Endothelial cell of umbilical vein (primary cell): ENCODE measurements at regions of chr5 and their contacts with region 1.

Region 1: DNA sequence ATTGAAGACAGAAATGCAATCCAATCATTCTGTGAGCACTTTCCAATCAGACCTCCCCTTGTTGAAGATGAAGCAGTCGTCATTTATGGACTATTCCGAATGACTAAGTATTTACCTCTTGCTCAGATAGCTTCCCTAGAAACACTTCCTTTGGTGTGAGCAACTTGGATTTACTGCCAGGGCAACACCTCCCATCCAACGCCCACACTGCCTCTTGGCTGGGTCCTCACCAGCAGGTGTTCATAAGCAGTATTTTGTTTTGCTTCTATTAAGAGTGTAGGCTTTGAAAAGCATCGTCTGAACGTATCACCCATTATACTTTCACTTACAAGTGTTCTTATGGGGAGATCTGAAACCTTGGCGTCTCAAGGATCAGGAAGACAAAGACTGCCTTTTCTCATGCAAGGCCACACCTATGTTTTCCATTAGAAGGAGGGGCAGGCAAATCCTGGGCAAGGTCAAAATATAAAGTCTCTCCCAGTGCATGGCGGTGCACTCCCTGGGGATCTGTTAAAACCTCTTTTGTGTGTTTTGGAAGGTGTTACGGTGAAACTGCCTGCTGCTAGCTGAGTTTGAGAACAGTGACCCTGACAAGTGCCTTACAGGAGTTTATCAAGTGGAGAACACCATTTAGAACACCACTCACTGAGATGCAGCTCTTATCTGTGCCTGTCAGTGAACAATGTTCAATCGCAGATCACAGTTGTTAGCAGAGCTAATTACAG is 10.6 kb upstream of the MARCHF3 start:
- DNase-seq: peak; percentile 87
- H3K4me3 ChIP-seq: peak overlapping the region in 1 of 3 experiments; percentile 19
- H3K27ac ChIP-seq: peak overlapping the region; percentile 87
- H3K4me1 ChIP-seq: peaks cover 33% of the 10 kb centered on the region
- H3K27me3 ChIP-seq: no peaks in the 10 kb centered on the region
- CTCF ChIP-seq: no peak
- POLR2A ChIP-seq: no peak

Region 2: DNA sequence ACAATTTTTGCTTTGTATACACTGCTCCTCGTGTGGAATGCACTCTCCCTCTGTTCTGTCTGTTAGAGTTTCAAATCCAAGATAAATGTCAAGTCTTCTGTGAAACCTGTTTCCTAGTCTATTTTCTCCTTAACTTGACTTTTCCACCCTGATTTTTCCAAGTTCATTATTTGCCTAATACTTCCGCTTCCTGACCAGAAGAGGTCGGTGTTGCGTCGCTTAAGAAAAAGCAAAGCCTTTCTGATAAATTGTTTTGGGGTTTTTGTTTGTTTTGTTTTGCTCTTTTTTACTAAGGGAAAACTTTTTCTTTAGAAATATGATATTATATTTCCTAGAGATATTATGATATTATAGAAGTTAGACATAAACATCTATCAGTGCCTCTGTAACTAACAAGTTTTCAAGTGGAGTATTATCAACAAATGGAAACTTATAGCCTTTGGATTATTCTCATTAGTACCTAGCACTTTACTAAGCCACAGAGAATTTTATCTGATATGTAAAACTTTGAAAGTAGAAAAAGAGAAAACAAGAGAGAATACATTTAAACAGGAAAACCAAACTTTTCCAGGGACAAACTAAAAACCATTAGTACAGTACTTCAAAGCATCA is 384.5 kb before region 1 on chr5:
- CTCF ChIA-PET with region 1: no interaction called
- POLR2A ChIA-PET with region 1: no interaction called
- dilution Hi-C with region 1: no loop called
- intact Hi-C with region 1: loop called (anchors 5 kb)
- DNase-seq: peak; percentile 47
- H3K4me3 ChIP-seq: no peak overlapping the region
- H3K27ac ChIP-seq: no peak overlapping the region
- H3K4me1 ChIP-seq: no peaks in the 10 kb centered on the region
- H3K27me3 ChIP-seq: no peaks in the 10 kb centered on the region
- CTCF ChIP-seq: peak; percentile 61 to 62
- POLR2A ChIP-seq: no peak

Region 3: GRCh38 chr5:126808521-126808988 is 232.4 kb before region 1 on chr5:
- CTCF ChIA-PET with region 1: no interaction called
- POLR2A ChIA-PET with region 1: no interaction called
- dilution Hi-C with region 1: no loop called
- intact Hi-C with region 1: loop called (anchors 2 kb)
- DNase-seq: peak; percentile 53
- H3K4me3 ChIP-seq: no peak overlapping the region
- H3K27ac ChIP-seq: no peak overlapping the region
- H3K4me1 ChIP-seq: peaks cover 39% of the 10 kb centered on the region
- H3K27me3 ChIP-seq: no peaks in the 10 kb centered on the region
- CTCF ChIP-seq: peak; percentile 13 to 40
- POLR2A ChIP-seq: no peak

Region 4: GRCh38 chr5:126869005-126869451 is 171.9 kb before region 1 on chr5:
- CTCF ChIA-PET with region 1: no interaction called
- POLR2A ChIA-PET with region 1: no interaction called
- dilution Hi-C with region 1: no loop called
- intact Hi-C with region 1: loop called (anchors 5 kb)
- DNase-seq: peak; percentile 26
- H3K4me3 ChIP-seq: no peak overlapping the region
- H3K27ac ChIP-seq: no peak overlapping the region
- H3K4me1 ChIP-seq: peaks cover 14% of the 10 kb centered on the region
- H3K27me3 ChIP-seq: no peaks in the 10 kb centered on the region
- CTCF ChIP-seq: no peak
- POLR2A ChIP-seq: no peak

Region 5: DNA sequence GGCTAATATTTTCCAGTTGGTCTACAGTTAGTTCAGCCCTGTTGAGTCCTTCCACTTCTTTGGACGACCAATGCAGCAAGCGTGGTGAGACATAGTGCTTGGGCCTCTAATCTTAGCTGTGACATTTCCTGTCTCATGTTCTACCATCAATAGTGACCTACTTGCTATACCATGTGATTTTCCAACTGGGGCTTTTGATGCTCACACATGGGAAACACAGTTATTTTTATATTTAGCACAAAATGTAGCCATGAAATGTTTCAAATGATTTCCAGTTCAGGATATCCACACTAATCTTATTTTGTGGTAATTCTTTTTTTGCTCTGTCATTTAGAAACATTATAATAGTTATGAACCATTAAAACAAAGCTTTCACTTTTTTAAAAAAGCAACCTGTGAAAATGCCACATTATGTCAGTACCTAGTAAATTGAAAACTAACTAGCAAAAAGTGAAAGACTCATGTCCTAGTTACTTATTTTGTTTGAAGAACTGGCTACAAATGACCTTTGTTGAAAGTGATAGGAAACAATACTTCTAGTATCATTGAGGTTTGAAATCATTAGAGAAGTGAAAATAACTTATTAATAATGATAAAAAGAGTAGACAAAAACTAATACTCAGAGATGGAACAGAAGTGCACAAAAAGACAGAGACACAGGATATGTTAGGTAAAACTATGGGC is 28.9 kb before region 1 on chr5:
- CTCF ChIA-PET with region 1: no interaction called
- POLR2A ChIA-PET with region 1: no interaction called
- dilution Hi-C with region 1: no loop called
- intact Hi-C with region 1: loop called (anchors 1 kb)
- DNase-seq: peak; percentile 43
- H3K4me3 ChIP-seq: no peak overlapping the region
- H3K27ac ChIP-seq: peak overlapping the region; percentile 83
- H3K4me1 ChIP-seq: peaks cover 40% of the 10 kb centered on the region
- H3K27me3 ChIP-seq: no peaks in the 10 kb centered on the region
- CTCF ChIP-seq: no peak
- POLR2A ChIP-seq: no peak

Region 6: GRCh38 chr5:127072861-127073846 is 32.2 kb after region 1 on chr5 and contains the start of gene C5orf63:
- CTCF ChIA-PET with region 1: no interaction called
- POLR2A ChIA-PET with region 1: no interaction called
- dilution Hi-C with region 1: no loop called
- intact Hi-C with region 1: loop called (anchors 1 kb)
- DNase-seq: peak; percentile 45
- H3K4me3 ChIP-seq: peak within 1 kb of the TSS; percentile 32 to 69 (median 56)
- H3K27ac ChIP-seq: peak within 1 kb of the TSS; percentile 72
- H3K4me1 ChIP-seq: peaks cover 61% of the 10 kb centered on the region
- H3K27me3 ChIP-seq: no peaks in the 10 kb centered on the region
- CTCF ChIP-seq: no peak
- POLR2A ChIP-seq: peak; percentile 41
- total RNA-seq, gene C5orf63: 4.0 and 5.3 TPM in 2 replicates